ENCODE measurements at regions of chr19 and their contacts with region 1.

Region 1: DNA sequence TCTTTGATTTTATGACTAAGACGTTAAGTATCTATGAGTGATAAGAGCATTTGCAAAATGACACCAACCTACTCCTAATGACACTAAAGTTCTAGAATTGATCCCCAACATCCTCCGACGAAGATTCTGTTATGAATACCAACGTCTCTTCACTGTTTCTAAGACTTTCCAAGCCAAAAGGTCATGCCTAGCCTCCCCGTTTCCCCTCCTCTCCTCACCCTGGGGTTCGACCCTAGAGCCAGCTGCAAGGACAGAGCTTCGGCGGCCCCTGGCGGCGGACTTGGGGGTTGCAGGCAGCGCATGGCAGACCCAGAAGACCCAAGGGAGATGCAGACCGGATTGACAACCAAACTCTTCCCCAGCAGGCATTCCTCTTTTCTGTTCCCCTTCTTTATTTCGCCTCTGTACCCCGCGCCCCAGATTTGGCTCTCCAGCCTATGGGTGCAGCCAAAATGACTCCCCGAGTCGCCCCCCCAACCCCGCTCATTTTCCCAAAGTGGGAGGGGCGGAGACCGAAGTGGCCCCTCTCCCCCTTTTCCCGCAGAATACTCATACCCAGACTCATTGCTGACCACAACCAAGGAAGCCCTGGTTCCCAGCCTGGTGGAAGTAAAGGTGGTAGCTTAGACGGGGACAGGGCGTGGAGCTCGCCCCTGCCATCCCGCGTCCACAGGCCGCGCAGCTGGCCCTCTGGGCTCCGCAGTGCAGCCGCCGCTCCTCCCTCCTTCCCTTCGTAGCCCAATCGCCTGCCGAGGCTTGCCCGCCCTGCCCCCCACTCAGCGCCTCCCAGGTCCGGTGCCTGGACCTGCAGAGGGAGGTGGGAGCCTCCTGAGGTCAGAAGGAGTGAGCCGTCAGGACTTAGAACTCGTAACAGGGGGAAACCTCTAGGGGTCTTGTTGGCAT is 4.1 kb upstream of the EML2 start:
- DNase-seq: peak; percentile 64
- ATAC-seq: peak; percentile 46
- H3K4me3 ChIP-seq: peak overlapping the region; percentile 39 to 67 (median 45); a peak in 5 of 6 replicates
- H3K27ac ChIP-seq: no peak overlapping the region
- H3K4me1 ChIP-seq: peaks cover 68% of the 10 kb centered on the region
- H3K27me3 ChIP-seq: peaks cover 0 to 9% of the 10 kb centered on the region in 2 experiments; a peak in 3 of 5 replicates
- CTCF ChIP-seq: peak; percentile 95
- EP300 ChIP-seq: no peak
- POLR2A ChIP-seq: no peak
- RAD21 ChIP-seq: peak; percentile 92

Region 2: DNA sequence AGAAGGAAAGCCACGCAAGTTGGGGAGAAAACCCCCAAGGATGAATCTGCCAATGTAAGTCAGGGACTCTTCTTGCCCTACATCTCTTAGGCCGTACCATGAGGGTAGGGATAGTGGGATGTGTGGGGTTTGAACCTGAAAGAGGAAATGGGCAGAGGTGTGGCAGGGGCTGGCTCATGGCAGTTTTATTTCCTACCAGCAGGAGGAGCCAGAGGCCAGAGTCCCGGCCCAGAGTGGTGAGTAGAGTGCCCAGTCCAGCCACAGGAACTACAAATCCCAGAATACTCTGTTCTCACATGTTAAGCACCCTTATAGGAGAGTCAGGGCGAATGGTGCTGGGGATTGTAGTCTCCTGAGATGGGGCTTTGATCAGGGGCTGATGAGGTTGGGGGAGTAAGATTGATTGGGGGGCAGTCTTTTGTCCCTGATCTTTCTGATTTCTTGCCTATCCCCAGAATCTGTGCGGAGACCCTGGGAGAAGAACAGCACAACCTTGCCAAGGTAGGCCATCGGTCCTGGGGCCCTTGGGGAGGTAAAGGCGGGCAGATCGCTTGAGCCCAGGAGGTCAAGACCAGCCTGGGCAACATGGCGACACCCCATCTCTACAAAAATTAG is 119.5 kb before region 1 on chr19:
- CTCF ChIA-PET with region 1: no interaction called
- POLR2A ChIA-PET with region 1: no interaction called
- in situ Hi-C with region 1: no loop called
- intact Hi-C with region 1: loop called (anchors 1 kb)
- DNase-seq: peak; percentile 82
- ATAC-seq: peak; percentile 92
- H3K4me3 ChIP-seq: no peak overlapping the region
- H3K27ac ChIP-seq: no peak overlapping the region
- H3K4me1 ChIP-seq: peaks cover under 1% of the 10 kb centered on the region; the same call in 1 of the 2 replicates
- H3K27me3 ChIP-seq: no peaks in the 10 kb centered on the region
- CTCF ChIP-seq: peak; percentile 92
- EP300 ChIP-seq: no peak
- POLR2A ChIP-seq: no peak
- RAD21 ChIP-seq: peak; percentile 88

Region 3: DNA sequence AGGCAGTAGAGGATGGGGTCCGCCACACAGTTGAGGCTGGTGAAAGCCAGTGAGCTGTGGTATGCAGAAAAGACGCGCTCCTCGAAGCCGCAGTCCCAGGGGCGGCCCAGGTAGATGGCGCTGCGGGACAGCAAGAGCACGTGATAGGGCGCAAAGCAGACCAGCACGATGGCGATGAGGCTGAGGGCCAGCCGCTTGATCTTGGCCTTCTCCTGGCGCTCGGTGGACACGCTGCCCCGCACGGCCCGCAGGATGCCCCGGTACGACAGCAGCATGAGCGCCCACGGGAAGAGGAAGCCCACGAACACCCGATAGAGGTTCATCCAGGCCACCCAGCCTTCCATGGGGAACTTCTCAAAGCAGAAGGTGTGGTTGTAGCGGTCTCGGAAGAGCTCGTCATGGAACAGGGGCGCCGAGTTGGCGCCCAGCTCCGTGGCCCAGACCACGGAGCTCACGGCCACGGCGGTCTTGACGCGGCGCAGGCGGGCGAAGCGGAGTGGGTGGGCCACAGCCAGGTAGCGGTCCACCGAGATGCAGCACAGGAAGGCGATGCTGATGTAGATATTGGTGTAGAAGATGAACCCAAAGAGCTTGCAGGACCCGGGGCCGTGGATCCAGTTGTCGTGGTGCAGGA is 52.2 kb before region 1 on chr19:
- CTCF ChIA-PET with region 1: interaction called, 29 read pairs
- POLR2A ChIA-PET with region 1: interaction called, 19 read pairs
- in situ Hi-C with region 1: loop called (anchors 5 kb)
- intact Hi-C with region 1: loop called (anchors 1 kb)
- DNase-seq: peak; percentile 64
- ATAC-seq: peak; percentile 94
- H3K4me3 ChIP-seq: no peak overlapping the region; a peak in 1 of 6 replicates
- H3K27ac ChIP-seq: no peak overlapping the region
- H3K4me1 ChIP-seq: peaks cover 27% of the 10 kb centered on the region
- H3K27me3 ChIP-seq: peaks cover 0 to 3% of the 10 kb centered on the region in 2 experiments; a peak in 2 of 5 replicates
- CTCF ChIP-seq: peak; percentile 99
- EP300 ChIP-seq: no peak
- POLR2A ChIP-seq: no peak
- RAD21 ChIP-seq: peak; percentile 90

Region 4: DNA sequence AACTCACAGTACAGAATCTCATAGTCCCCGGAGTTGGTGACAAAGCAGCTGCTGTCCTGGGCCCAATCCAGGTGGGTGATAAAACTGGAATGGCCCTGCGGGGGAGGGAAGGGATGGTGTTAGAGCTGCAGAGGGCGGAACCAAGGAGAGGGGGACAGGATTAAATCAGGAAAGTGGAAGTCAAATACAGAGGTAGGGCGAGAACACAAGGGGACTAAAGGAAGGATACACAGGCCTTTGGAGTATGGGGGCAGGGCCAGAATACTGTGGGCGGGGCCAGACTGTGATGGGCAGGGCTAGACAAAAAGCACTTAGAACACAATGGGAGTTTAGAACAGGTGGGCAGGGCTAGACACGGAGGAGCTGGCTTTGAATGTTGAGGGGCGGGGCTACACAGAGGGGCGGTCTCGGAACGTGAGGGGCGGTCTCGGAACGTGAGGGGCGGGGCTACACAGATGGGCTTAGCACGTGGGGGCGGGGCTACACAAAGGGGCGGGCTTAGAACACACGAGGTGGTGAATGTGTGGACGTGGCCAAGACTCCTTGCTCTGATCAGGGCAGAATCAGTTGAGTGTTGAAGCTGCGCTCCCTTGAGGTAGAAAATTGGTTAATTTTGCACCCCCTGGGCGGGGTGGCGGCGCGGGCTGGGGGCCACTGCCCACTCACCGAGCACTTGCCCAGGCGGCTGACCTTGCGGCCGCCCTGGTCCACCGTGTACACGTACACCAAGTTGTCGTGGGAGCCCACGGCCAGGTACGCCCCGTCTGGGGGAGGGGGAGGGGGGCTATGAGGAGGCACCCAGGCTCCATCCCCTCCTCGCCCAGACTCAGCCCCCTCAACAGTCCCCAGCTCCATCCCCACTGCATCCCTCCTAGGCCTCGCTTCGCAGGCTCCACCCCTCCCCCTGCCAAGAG is 27.2 kb before region 1 on chr19:
- CTCF ChIA-PET with region 1: no interaction called
- POLR2A ChIA-PET with region 1: interaction called, 18 read pairs
- in situ Hi-C with region 1: no loop called
- intact Hi-C with region 1: no loop called
- DNase-seq: peak; percentile 62
- ATAC-seq: peak; percentile 81
- H3K4me3 ChIP-seq: no peak overlapping the region
- H3K27ac ChIP-seq: no peak overlapping the region
- H3K4me1 ChIP-seq: 0 out of 2 replicates have a peak, but pooled peaks cover 8% of the 10 kb centered on the region
- H3K27me3 ChIP-seq: no peaks in the 10 kb centered on the region
- CTCF ChIP-seq: no peak
- EP300 ChIP-seq: no peak
- POLR2A ChIP-seq: no peak
- RAD21 ChIP-seq: no peak

Region 5: GRCh38 chr19:45681391-45682015 is 38.2 kb after region 1 on chr19:
- CTCF ChIA-PET with region 1: interaction called, 3 read pairs
- POLR2A ChIA-PET with region 1: interaction called, 12 read pairs
- in situ Hi-C with region 1: no loop called
- intact Hi-C with region 1: no loop called
- DNase-seq: peak; percentile 63
- ATAC-seq: peak; percentile 82
- H3K4me3 ChIP-seq: peak overlapping the region; percentile 51 to 68 (median 53)
- H3K27ac ChIP-seq: no peak overlapping the region
- H3K4me1 ChIP-seq: peaks cover 30% of the 10 kb centered on the region
- H3K27me3 ChIP-seq: no peaks in the 10 kb centered on the region; a peak in 1 of 5 replicates
- CTCF ChIP-seq: peak; percentile 94
- EP300 ChIP-seq: 0 out of 4 replicates have a peak, but pooled peaks of 1 of the 2 experiments have one; percentile 10
- POLR2A ChIP-seq: peak in 1 of 2 experiments; percentile 55; a peak in 1 of 4 replicates
- RAD21 ChIP-seq: peak; percentile 87

Region 6: DNA sequence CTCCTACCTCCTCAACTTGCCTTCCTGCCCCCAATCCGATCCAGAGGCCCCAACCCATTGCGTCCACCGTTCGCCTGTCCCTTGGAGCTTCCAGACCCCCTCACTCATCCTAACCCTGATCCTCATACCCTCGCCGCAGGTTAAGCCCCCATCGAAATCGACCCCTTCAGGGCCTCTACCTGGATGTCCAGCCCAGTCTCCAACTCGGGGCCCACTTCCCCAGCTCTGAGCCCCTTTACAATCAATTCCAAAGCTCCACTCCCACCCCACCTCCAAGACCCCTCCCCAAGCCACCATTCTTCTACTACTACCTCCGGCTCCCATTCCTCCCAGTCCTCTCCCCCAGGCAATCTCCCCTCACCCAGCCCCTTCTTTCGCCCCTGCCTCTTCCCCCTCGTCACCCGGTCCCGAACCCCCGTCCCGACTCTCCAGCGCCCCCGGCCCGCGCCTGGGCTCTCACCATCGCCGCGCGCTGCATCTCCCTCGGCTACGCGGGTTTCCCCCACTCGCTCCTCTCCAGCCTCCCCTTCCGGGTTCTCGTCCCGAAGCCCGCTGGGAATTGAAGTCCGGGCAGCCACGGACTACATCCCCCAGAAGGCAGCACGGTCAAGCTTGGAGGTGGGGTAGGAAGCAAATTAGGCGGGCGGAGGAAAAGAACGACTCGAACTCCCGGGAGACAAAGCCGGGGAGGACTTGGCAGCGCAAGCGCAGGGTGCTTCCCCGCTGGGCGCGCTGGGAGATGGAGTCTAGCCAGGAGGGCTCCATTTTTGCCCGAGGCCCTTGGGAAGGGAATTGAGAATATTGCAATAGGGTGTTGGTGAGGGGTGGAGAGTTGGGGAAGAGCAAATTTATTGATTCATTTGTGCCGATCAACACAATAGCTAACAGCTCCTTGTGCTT is 87.4 kb after region 1 on chr19 and contains the start of gene FBXO46:
- CTCF ChIA-PET with region 1: no interaction called
- POLR2A ChIA-PET with region 1: no interaction called
- in situ Hi-C with region 1: no loop called
- intact Hi-C with region 1: no loop called
- DNase-seq: peak; percentile 96
- ATAC-seq: peak; percentile 98
- H3K4me3 ChIP-seq: peak within 1 kb of the TSS; percentile 85 to 94 (median 90)
- H3K27ac ChIP-seq: peak within 1 kb of the TSS; percentile 50
- H3K4me1 ChIP-seq: peaks cover 40% of the 10 kb centered on the region
- H3K27me3 ChIP-seq: peaks cover 0 to 4% of the 10 kb centered on the region in 2 experiments; a peak in 1 of 5 replicates
- CTCF ChIP-seq: peak; percentile 75
- EP300 ChIP-seq: peak in 1 of 2 experiments; percentile 12; a peak in 1 of 4 replicates
- POLR2A ChIP-seq: peak in 1 of 2 experiments; percentile 84; a peak in 2 of 4 replicates
- RAD21 ChIP-seq: no peak
- total RNA-seq, gene FBXO46: 4.7 and 6.2 TPM in 2 replicates

Measured in HepG2 (cell line).